Uterus (tissue), 4 donors: ENCODE measurements at regions of chr11 and their contacts with region 1.

Region 1: GRCh38 chr11:45964911-45965389 is 42.5 kb downstream of the LARGE2 start:
- DNase-seq: peak; percentile 64 to 69
- H3K4me3 ChIP-seq: no peak overlapping the region
- H3K27ac ChIP-seq: peak overlapping the region; percentile 44 to 62
- H3K4me1 ChIP-seq: no peaks in the 10 kb centered on the region
- H3K27me3 ChIP-seq: no peaks in the 10 kb centered on the region
- CTCF ChIP-seq: peak; percentile 87 to 93 (median 88)
- POLR2A ChIP-seq: no peak

Region 2: GRCh38 chr11:46003574-46003973 is 38.6 kb after region 1 on chr11:
- intact Hi-C with region 1: loop called (anchors 5 kb)
- DNase-seq: no peak
- H3K4me3 ChIP-seq: no peak overlapping the region
- H3K27ac ChIP-seq: no peak overlapping the region
- H3K4me1 ChIP-seq: peaks cover 0 to 13% of the 10 kb centered on the region in 2 donors
- H3K27me3 ChIP-seq: no peaks in the 10 kb centered on the region
- CTCF ChIP-seq: no peak
- POLR2A ChIP-seq: no peak

Region 3: DNA sequence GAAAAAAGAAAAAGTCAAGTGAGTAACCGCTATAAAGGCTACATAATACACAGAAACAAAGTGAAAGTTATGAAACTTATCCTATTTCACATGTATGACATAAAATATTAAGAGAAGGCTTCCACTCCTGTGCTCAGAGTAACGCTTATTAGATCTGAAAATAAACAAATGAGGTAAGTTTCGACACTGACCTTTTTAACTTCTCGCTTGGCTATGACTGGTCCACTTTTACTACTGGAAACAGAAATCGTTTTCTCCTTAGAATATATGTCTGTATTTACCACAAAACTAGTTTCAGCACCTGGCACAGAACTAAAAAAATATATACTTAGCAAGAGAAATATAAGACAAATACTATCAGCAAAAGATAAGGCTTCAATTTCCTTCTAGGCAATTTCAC is 1785.8 kb after region 1 on chr11:
- intact Hi-C with region 1: no loop called
- DNase-seq: no peak
- H3K4me3 ChIP-seq: no peak overlapping the region
- H3K27ac ChIP-seq: no peak overlapping the region
- H3K4me1 ChIP-seq: no peaks in the 10 kb centered on the region
- H3K27me3 ChIP-seq: no peaks in the 10 kb centered on the region
- CTCF ChIP-seq: no peak
- POLR2A ChIP-seq: no peak